Gastrocnemius medialis (tissue), 4 donors: ENCODE measurements at regions of chr12 and their contacts with region 1.

Region 1: GRCh38 chr12:53500776-53501614 is at the start of gene TARBP2:
- DNase-seq: peak; percentile 99
- ATAC-seq: peak; percentile 89 to 93
- H3K4me3 ChIP-seq: peak within 1 kb of the TSS; percentile 73 to 84 (median 82)
- H3K27ac ChIP-seq: peak within 1 kb of the TSS; percentile 90 to 97 (median 92)
- H3K4me1 ChIP-seq: peaks cover 24 to 25% of the 10 kb centered on the region in 2 donors
- H3K27me3 ChIP-seq: no peaks in the 10 kb centered on the region
- CTCF ChIP-seq: peak in 1 of 5 experiments; percentile 25
- POLR2A ChIP-seq: peak; percentile 47 to 68
- total RNA-seq, gene TARBP2: 6.8 to 17.4 (median 11.6) TPM

Region 2: DNA sequence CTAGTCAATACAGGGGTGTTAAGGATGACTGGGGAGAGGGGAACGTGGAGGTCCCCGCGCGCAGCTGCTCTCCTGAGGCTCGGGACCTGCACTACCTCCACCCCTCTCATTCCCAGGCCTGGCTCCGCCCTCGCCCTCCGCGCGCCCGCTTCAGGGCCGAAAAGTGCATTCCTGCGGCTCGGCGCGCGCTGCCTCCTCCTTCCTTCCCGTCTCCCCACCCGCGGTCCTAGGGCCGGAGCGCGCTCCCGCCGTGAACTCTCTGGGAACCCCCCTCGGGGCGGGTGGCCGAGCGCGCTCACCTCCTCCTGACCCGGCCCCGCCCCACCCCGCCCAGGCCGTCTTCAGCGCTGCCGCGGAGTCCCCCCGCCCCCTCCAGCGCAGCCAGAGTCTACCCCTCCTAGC is 280.2 kb before region 1 on chr12:
- in situ Hi-C with region 1: no loop called
- intact Hi-C with region 1: loop called (anchors 5 kb)
- DNase-seq: peak; percentile 80 to 81
- ATAC-seq: peak; percentile 81 to 83
- H3K4me3 ChIP-seq: peak overlapping the region; percentile 74 to 83 (median 75)
- H3K27ac ChIP-seq: peak overlapping the region; percentile 98 to 100 (median 98)
- H3K4me1 ChIP-seq: peaks cover 37 to 60% of the 10 kb centered on the region in 2 donors
- H3K27me3 ChIP-seq: no peaks in the 10 kb centered on the region
- CTCF ChIP-seq: no peak
- POLR2A ChIP-seq: no peak

Region 3: DNA sequence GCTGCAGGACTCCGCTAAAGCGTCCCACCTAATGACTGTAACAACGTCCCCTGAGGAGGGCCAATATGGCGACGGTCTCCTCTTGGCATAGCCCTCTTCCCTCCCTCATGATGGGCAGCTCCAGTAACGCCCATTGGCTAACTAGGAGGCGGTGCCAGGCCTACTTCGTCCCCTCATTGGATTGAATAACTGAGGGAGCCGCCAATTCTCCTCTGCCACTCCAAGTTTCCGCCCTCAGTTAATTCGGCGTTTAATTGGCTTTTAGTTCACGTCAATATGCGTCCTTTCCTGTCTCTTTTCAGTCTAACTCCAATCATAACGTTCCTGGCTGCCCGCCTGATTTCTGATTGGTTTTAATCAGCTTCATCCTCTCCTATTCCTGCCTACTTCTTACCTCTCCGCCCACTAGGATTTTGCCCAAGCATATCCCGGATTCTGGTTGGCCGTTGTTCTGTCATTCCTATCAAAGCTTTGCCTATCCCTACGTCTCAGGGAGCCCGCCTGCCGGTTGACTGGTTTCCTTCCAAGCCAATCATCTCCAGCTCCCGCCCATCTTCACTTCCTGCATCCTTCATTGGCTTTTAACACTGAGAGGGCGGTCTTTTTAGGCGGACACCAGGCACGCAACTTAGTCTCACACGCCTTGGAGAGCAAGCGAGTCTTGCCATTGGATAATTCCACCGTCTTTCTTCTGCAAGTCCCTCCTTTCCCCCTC is 121.4 kb before region 1 on chr12:
- in situ Hi-C with region 1: no loop called
- intact Hi-C with region 1: loop called (anchors 2 kb)
- DNase-seq: peak; percentile 100
- ATAC-seq: peak; percentile 84 to 89
- H3K4me3 ChIP-seq: peak overlapping the region; percentile 57 to 86 (median 66)
- H3K27ac ChIP-seq: peak overlapping the region; percentile 93 to 99 (median 96)
- H3K4me1 ChIP-seq: peaks cover 43 to 46% of the 10 kb centered on the region in 2 donors
- H3K27me3 ChIP-seq: no peaks in the 10 kb centered on the region
- CTCF ChIP-seq: no peak
- POLR2A ChIP-seq: peak; percentile 73 to 83

Region 4: DNA sequence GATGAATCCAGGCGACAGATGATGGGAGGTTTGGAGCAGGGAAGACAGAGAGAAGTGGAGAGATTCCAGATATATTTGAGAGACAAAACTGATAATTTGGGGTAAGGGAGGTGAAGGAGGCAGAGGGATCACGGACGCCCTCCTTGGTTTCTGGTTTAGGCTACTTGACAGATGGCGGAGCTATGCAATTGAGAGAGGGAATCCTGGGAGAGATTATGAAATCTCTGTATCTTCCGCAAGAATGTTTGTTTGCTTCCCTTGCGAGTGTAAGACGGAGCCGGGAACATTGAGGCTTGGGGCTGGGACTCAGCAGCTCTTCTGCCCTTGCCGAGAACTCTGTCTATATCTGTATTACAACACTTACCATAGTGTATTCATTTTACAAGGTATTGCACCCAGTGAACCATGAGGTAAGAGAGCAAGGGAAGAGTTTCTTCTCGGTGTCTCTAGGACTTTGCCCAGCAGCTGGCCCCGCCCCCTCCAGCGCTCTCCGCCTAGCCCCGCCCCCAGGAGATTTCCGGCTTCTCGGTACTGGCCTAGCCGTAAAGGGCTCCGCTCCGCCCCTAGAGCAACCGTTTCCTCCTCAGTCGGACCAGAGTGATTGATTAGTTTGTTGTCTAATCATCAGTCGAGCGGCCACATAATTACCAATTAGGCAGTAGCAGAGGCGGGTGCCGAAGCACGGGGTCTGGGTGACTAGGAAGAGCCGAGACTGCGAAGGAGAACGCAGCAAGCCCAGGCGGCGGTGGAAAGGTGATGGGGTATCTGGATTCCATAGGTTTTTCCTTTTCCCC is 59.8 kb before region 1 on chr12 and contains the start of gene PRR13:
- in situ Hi-C with region 1: loop called in 1 of 4 experiments (anchors 10 kb)
- intact Hi-C with region 1: loop called (anchors 1 kb)
- DNase-seq: peak; percentile 99
- ATAC-seq: peak; percentile 94 to 98
- H3K4me3 ChIP-seq: peak within 1 kb of the TSS; percentile 68 to 80 (median 78)
- H3K27ac ChIP-seq: peak within 1 kb of the TSS; percentile 87 to 94 (median 91)
- H3K4me1 ChIP-seq: peaks cover 12 to 13% of the 10 kb centered on the region in 2 donors
- H3K27me3 ChIP-seq: no peaks in the 10 kb centered on the region
- CTCF ChIP-seq: no peak
- POLR2A ChIP-seq: peak; percentile 89 to 97
- total RNA-seq, gene PRR13: 40.3 to 90.4 (median 74.2) TPM

Region 5: DNA sequence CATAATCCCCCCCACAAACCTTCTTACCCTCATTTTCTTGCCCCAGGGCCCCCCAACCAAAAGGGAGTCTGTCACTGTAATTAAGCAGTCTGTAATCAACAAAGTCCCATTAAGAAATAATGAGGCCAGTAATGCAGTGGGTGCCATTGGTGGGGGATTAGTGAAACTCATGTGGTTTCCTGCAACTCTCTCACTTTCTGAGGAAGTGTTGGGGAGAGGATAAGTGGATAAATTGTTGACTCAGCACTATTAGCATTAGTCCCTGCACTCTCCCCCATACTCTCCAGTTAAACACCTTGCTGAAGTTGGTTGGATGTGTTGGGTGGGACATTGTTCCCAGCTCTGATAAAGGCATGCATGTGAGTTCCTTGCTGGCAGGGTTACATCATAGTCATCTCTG is 391.8 kb after region 1 on chr12:
- in situ Hi-C with region 1: no loop called
- intact Hi-C with region 1: no loop called
- DNase-seq: no peak
- ATAC-seq: no peak
- H3K4me3 ChIP-seq: no peak overlapping the region
- H3K27ac ChIP-seq: no peak overlapping the region
- H3K4me1 ChIP-seq: no peaks in the 10 kb centered on the region
- H3K27me3 ChIP-seq: peaks cover 10 to 21% (median 10%) of the 10 kb centered on the region in 3 donors
- CTCF ChIP-seq: no peak
- POLR2A ChIP-seq: no peak

Region 6: DNA sequence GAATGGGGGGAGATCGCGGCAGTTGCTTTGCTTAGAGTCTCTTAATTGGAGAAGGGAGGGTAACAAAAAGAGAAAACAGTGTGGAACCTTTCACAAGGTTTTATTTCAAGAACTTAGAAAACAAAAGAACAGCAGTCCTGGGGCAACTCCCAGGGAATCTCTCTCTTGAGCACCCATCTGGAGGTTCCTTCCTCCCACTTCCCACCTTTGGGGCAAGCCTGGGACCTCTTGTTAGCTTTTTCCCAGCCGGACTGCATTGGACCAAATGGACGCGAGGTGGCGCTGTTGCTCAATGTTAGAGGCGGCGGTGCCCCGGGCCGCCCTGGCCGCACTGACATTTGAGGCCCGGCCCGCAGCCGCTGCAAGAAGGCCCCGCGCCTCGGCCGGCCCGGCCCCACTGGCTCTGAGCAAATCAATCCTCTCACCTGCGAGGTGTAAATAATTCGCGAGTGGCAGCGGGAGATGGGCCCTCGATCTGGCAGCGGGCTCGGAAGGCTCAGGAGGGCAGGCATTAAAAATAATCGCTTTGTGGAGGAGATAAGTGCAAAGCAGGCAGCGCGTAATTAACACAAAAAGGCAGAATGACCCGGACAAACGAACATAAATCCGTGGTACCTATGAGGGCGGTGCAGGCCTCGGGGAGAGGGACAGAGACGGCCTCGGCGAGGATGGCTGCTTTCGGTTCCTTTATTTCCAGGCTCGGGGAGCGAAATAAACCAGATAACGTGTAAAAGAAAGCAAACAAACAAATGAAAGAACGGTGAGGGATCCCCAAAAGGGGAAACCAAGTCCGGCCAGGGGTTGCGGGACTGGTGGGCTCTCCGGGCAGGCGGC is 505.1 kb after region 1 on chr12:
- in situ Hi-C with region 1: no loop called
- intact Hi-C with region 1: loop called (anchors 5 kb)
- DNase-seq: peak; percentile 83 to 91
- ATAC-seq: peak; percentile 63 to 67
- H3K4me3 ChIP-seq: peak overlapping the region; percentile 24 to 82 (median 63)
- H3K27ac ChIP-seq: peak overlapping the region; percentile 94 to 100 (median 98)
- H3K4me1 ChIP-seq: peaks cover 31 to 64% of the 10 kb centered on the region in 2 donors
- H3K27me3 ChIP-seq: no peaks in the 10 kb centered on the region
- CTCF ChIP-seq: peak; percentile 91 to 99 (median 97)
- POLR2A ChIP-seq: no peak